ENCODE measurements at regions of chr16 and their contacts with region 1.

Region 1: DNA sequence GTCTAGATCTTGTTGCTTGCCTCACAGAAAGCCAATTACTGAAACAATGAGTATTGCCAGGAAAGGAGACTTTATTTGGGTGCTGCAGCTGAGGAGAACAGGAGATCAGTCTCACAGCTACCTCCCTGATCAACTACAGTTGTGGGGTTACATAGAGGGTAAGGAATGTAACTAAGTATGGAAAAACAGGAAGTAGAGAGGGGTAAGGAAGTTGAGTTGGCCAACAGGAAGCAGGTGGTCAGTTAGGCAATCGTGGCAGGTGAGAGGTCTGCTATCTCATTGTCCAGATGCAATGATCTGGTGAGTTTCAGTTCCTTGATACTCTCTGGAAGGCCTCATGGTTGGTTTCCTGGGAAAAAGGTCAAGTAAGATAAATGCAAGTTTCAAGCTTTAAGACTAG is 333.1 kb upstream of the GOT2 start:
- DNase-seq: peak; percentile 98
- H3K4me3 ChIP-seq: no peak overlapping the region
- H3K27ac ChIP-seq: peak overlapping the region; percentile 91
- H3K4me1 ChIP-seq: peaks cover 24% of the 10 kb centered on the region
- H3K27me3 ChIP-seq: no peaks in the 10 kb centered on the region
- CTCF ChIP-seq: no peak
- POLR2A ChIP-seq: peak; percentile 90

Region 2: GRCh38 chr16:58814348-58814801 is 252.8 kb before region 1 on chr16:
- CTCF ChIA-PET with region 1: no interaction called
- POLR2A ChIA-PET with region 1: no interaction called
- dilution Hi-C with region 1: no loop called
- intact Hi-C with region 1: loop called (anchors 1 kb)
- DNase-seq: peak; percentile 63
- H3K4me3 ChIP-seq: peak overlapping the region in 2 of 3 experiments; percentile 17 to 59
- H3K27ac ChIP-seq: no peak overlapping the region
- H3K4me1 ChIP-seq: no peaks in the 10 kb centered on the region
- H3K27me3 ChIP-seq: no peaks in the 10 kb centered on the region
- CTCF ChIP-seq: peak; percentile 88 to 93
- POLR2A ChIP-seq: no peak

Region 3: DNA sequence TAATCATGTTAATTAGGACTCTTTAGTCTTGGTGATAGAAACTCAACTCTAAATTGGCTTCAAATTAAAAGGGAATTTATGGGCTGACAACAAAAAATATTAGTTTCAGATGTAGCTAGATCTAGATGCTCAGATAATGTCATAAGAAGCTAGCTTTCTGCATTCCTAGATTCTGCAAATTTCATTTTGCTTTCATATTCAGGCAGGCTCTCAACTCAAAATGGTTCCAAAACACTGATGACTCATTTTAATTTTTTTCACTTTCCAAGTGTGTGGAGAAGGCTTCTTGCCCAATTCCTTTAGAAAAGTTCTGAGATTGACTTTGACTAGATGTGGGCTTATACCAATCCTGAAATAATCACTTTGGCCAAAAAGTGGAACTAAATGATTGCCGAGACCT is 96.4 kb before region 1 on chr16:
- CTCF ChIA-PET with region 1: no interaction called
- POLR2A ChIA-PET with region 1: no interaction called
- dilution Hi-C with region 1: no loop called
- intact Hi-C with region 1: no loop called
- DNase-seq: no peak
- H3K4me3 ChIP-seq: no peak overlapping the region
- H3K27ac ChIP-seq: no peak overlapping the region
- H3K4me1 ChIP-seq: no peaks in the 10 kb centered on the region
- H3K27me3 ChIP-seq: no peaks in the 10 kb centered on the region
- CTCF ChIP-seq: no peak
- POLR2A ChIP-seq: no peak

Region 4: GRCh38 chr16:59044616-59045015 is 22.6 kb before region 1 on chr16:
- CTCF ChIA-PET with region 1: no interaction called
- POLR2A ChIA-PET with region 1: no interaction called
- dilution Hi-C with region 1: no loop called
- intact Hi-C with region 1: loop called (anchors 1 kb)
- DNase-seq: no peak
- H3K4me3 ChIP-seq: no peak overlapping the region
- H3K27ac ChIP-seq: no peak overlapping the region
- H3K4me1 ChIP-seq: peaks cover 20% of the 10 kb centered on the region
- H3K27me3 ChIP-seq: no peaks in the 10 kb centered on the region
- CTCF ChIP-seq: no peak
- POLR2A ChIP-seq: no peak

Region 5: DNA sequence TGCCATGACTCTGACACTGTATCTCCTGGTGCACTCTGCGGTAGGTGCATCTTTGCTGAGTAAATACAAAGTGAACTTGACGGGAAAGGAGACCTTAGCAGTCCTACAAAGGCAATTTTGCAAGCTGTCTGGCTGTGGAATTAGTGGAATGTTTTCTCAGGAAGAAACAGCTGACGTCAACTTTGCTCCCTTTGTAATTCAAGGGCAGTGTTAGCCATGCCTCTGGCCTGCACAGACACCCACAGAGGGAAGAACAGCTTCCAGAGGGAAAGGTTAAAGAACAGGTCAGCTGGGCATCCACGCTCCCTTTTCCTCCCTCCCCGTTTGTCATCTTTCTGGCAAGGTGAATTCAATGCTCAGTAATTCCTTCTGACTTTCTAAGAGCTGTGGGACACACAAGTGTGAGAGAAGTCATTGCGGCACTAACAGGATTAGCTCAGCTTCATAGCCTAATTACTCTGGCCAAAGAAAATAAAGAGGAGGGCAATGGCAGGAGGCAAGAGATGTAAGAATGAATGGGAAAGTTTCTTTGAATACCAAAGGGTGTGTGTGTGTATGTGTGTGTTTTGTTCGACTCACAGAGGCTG is 143.8 kb after region 1 on chr16:
- CTCF ChIA-PET with region 1: interaction called, 4 read pairs
- POLR2A ChIA-PET with region 1: no interaction called
- dilution Hi-C with region 1: no loop called
- intact Hi-C with region 1: loop called (anchors 1 kb)
- DNase-seq: peak; percentile 97
- H3K4me3 ChIP-seq: peak overlapping the region in 1 of 3 experiments; percentile 35
- H3K27ac ChIP-seq: peak overlapping the region; percentile 92
- H3K4me1 ChIP-seq: peaks cover 33% of the 10 kb centered on the region
- H3K27me3 ChIP-seq: no peaks in the 10 kb centered on the region
- CTCF ChIP-seq: no peak
- POLR2A ChIP-seq: no peak

Region 6: GRCh38 chr16:59632276-59632855 is 565.2 kb after region 1 on chr16:
- CTCF ChIA-PET with region 1: no interaction called
- POLR2A ChIA-PET with region 1: no interaction called
- dilution Hi-C with region 1: no loop called
- intact Hi-C with region 1: loop called (anchors 10 kb)
- DNase-seq: peak; percentile 81
- H3K4me3 ChIP-seq: no peak overlapping the region
- H3K27ac ChIP-seq: peak overlapping the region; percentile 38
- H3K4me1 ChIP-seq: peaks cover 50% of the 10 kb centered on the region
- H3K27me3 ChIP-seq: no peaks in the 10 kb centered on the region
- CTCF ChIP-seq: no peak
- POLR2A ChIP-seq: peak; percentile 40